ENCODE measurements at regions of chr11 and their contacts with region 1.

Region 1: GRCh38 chr11:86245369-86246292 is 1.1 kb downstream of the EED start:
- DNase-seq: peak in 1 of 5 donors; percentile 18
- H3K4me3 ChIP-seq: peak overlapping the region; percentile 90
- H3K27ac ChIP-seq: peak overlapping the region; percentile 34 to 97
- H3K4me1 ChIP-seq: peaks cover 3% of the 10 kb centered on the region
- H3K27me3 ChIP-seq: no peaks in the 10 kb centered on the region
- CTCF ChIP-seq: no peak
- EP300 ChIP-seq: no peak
- POLR2A ChIP-seq: no peak

Region 2: DNA sequence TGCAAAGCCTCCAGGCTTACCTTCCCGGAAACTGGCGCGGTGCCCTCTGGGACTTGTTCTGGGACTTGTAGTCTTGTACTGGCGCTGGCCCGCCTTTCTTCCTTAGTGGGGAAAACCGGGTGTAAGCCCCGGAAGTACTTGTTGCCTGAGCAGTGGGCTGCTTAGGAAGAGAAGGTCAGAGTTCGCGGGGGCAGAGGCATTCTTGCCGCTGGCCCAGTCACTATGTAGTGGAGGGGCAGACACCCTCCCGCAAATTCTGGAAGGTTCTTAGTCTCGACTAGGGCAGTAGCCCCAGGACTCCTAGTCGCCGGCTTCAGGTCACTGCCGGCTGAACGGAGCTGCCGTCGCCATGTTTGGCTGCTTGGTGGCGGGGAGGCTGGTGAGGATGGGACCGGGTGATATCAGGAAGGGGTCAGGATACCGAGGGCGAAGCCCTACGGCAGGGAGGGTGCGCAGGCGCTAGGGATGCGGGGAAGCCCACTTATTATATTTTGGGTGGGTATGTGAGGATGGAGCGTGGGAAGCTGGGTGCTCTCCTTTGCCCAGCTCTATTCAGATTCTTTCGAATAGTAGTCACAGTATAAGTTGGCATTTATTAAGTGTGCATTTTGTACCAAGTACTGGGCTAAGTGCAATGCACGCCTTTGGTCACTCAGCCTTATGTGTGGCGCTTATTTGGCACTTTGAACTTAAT is 56.6 kb after region 1 on chr11 and contains the start of gene HIKESHI:
- intact Hi-C with region 1: loop called in 1 of 4 experiments (anchors 2 kb)
- DNase-seq: peak; percentile 98 to 100 (median 100)
- H3K4me3 ChIP-seq: peak within 1 kb of the TSS; percentile 63
- H3K27ac ChIP-seq: peak within 1 kb of the TSS; percentile 26 to 41
- H3K4me1 ChIP-seq: no peaks in the 10 kb centered on the region
- H3K27me3 ChIP-seq: no peaks in the 10 kb centered on the region
- CTCF ChIP-seq: peak in 1 of 3 donors; percentile 10
- EP300 ChIP-seq: no peak
- POLR2A ChIP-seq: peak; percentile 42
- total RNA-seq, gene HIKESHI: 26.6 to 32.6 (median 29.8) TPM